Activated CD4-positive, alpha-beta T cell treated with anti-CD3 and anti-CD28 coated beads, Interleukin-2, amount 10 ng/mL, durations not matched to agents 24 days and 14 days (primary cell): ENCODE measurements at regions of chr11 and their contacts with region 1.

Region 1: DNA sequence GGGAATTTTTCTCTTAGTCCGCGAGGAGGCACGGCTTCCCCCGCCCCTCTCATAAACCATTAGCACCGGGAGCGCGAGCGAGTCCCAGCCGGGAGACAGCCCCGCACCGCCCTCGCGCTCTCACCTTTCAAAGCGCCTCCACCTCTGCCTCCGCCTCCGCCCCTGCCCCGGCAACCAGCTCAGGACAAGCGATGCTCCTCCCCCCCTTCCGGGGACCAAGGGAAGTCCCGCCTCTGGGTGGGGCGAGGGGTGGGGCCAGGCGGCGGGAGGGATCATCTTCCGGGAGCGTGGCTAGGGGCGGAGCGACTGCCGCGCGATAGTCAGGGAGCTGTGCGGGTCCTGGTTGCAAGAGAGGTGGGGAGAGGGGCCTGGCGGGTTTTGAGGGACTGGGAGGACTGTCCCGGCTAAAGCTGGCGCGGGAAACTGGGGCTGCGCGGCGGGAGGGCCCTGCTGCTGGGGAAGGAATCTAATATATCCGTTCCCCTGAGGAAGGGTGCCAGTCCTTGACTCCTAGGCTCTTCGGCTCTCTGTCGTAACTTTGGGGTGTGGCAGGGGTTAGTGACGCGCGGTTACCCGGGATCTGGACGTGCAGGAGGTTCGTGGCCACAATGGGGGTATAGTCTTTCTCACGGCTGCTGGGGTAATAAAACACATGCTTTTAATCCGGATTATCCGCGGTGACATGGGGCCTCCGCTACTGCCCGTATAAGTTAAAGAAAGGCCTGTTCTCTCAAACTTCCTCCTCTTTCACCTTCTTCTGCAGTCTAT is at the starts of genes CCDC82 and JRKL:
- DNase-seq: peak; percentile 99
- H3K4me3 Mint-ChIP-seq: peak within 1 kb of the TSS; percentile 93
- H3K27ac Mint-ChIP-seq: peak within 1 kb of the TSS; percentile 96
- H3K4me1 Mint-ChIP-seq: peaks cover 52% of the 10 kb centered on the region
- H3K27me3 Mint-ChIP-seq: no peaks in the 10 kb centered on the region
- total RNA-seq, gene CCDC82: 27.6 and 31.8 TPM in 2 replicates
- total RNA-seq, gene JRKL: 9.9 and 11.9 TPM in 2 replicates

Region 2: DNA sequence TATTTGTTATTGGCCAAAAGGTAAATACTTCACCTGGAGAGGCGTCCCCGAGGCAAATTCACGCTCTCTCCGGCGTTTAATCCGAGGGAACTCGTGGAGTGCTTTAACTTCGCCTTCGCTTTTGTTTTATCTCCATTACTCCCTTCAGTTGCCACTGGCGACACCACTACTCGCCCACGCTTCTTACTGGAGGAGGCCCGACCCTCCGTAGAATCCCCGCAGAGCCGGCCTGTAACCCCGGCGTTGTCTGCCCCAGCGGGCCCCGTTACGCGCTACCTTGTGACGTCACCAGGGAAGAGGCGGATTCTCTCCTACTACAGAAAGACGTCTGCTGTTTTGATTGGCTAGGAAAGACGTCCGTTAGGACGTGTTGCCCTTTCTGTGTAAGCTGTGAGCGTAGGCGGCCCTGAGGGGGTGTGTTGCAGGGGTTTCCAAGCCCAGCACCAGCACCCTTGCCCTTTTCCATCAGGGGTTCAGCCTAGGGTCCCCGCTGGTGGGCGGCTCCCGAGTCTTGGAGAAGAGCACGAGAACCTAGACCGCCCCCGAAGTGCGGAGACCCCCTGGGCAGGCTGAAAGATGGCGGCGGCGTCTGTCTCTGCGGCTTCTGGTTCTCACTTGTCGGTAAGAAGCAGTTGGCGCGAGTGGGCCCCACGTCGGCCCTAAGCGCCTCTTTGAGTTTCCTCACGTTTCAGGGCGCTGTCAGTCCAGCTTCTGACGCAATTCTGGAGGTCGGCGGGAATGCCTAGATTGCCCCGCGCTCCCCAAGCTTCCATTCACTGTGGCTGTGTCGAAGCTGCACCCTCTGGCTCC is 599.6 kb before region 1 on chr11 and contains the start of gene CEP57:
- intact Hi-C with region 1: loop called (anchors 1 kb)
- DNase-seq: peak; percentile 98
- H3K4me3 Mint-ChIP-seq: peak within 1 kb of the TSS; percentile 98
- H3K27ac Mint-ChIP-seq: peak within 1 kb of the TSS; percentile 100
- H3K4me1 Mint-ChIP-seq: peaks cover 45% of the 10 kb centered on the region
- H3K27me3 Mint-ChIP-seq: no peaks in the 10 kb centered on the region
- total RNA-seq, gene CEP57: 75.7 and 87.6 TPM in 2 replicates

Region 3: DNA sequence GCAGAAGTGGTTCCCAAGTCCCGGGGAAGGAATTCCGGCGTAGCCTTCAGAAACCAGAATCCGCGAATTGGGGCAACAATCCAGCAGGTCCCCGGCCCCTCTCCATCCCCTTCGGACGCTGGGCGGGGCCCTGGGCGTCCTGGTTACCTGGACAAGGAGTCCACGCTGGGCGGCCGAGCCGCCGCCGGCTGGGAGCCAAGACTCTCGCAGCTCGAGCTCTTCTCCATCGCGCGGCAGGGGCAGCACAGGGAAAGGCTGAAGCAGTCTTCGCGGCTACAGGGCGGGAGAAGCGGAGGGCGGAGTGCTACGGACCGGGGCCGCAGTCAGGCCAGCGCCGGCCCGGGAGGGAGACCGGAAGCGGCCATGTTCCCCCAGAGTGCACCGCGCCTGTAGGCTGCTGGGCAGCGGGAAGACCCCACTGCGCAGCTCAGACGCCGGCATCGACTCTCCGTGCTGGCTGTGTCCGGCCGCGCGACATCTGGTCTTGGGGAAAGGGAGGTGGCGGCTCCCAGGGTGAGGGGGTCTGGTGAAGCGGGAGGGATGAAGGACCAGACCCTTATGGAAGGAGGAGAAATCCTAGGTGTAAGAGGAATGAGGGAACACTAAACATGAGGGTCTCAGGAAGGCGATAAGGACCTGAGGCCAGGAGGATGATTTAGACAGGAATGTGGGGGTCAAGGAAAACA is 466.0 kb before region 1 on chr11 and contains the start of gene MTMR2:
- intact Hi-C with region 1: loop called (anchors 5 kb)
- DNase-seq: peak; percentile 86
- H3K4me3 Mint-ChIP-seq: peak within 1 kb of the TSS; percentile 99
- H3K27ac Mint-ChIP-seq: peak within 1 kb of the TSS; percentile 96
- H3K4me1 Mint-ChIP-seq: peaks cover 24% of the 10 kb centered on the region
- H3K27me3 Mint-ChIP-seq: peaks cover 12% of the 10 kb centered on the region
- total RNA-seq, gene MTMR2: 37.5 and 38.4 TPM in 2 replicates

Region 4: DNA sequence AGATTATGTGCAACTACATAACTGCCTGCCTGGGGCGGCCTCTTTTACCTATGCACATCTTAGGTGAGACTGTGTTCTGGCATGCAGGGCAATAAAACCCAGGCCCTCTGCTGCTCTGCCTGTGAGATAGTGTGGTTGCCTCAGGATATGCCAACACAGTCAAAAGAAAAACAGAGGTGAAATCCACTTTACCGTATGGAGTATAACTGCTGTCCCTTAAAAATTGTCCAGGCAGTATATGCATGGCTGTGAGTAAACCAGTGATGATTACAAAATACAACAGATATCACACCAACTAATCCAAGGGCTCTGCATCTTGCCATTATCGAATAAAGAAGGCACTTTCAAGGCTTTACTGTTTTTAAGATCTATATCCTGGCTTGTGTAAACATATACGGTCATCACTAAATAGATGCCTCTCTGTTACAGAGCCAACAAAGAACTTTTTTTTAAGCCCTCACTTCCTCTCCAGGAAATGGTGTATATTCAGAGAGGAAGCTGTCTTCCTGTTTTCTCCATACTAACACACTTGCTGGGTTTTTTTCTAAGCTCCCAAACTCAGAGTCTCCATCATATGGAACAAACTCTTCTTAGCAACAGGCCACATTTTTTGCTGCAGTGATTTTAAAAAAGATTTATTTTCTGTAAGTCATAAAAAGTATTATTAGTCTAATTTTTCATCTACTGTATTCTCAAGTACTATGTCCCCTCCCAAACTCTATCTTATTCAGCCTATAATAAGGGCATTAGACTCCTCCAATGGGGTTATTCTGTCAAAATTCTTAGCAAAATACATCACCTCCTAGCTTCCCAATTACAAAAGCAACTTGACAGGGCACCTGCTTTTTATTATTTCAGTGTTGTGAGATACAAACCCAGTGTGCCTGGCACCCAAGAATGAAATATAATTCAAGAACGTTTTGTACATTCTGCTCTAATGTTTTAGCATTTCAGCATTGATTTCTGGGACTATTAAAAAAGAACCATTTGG is 182.2 kb before region 1 on chr11:
- intact Hi-C with region 1: loop called (anchors 5 kb)
- DNase-seq: peak; percentile 78
- H3K4me3 Mint-ChIP-seq: peak overlapping the region; percentile 74
- H3K27ac Mint-ChIP-seq: peak overlapping the region; percentile 93
- H3K4me1 Mint-ChIP-seq: peaks cover 71% of the 10 kb centered on the region
- H3K27me3 Mint-ChIP-seq: no peaks in the 10 kb centered on the region

Region 5: GRCh38 chr11:96254087-96254486 is 135.8 kb before region 1 on chr11:
- intact Hi-C with region 1: loop called (anchors 5 kb)
- DNase-seq: peak; percentile 83
- H3K4me3 Mint-ChIP-seq: peak overlapping the region; percentile 79
- H3K27ac Mint-ChIP-seq: peak overlapping the region; percentile 84
- H3K4me1 Mint-ChIP-seq: peaks cover 73% of the 10 kb centered on the region
- H3K27me3 Mint-ChIP-seq: no peaks in the 10 kb centered on the region

Region 6: DNA sequence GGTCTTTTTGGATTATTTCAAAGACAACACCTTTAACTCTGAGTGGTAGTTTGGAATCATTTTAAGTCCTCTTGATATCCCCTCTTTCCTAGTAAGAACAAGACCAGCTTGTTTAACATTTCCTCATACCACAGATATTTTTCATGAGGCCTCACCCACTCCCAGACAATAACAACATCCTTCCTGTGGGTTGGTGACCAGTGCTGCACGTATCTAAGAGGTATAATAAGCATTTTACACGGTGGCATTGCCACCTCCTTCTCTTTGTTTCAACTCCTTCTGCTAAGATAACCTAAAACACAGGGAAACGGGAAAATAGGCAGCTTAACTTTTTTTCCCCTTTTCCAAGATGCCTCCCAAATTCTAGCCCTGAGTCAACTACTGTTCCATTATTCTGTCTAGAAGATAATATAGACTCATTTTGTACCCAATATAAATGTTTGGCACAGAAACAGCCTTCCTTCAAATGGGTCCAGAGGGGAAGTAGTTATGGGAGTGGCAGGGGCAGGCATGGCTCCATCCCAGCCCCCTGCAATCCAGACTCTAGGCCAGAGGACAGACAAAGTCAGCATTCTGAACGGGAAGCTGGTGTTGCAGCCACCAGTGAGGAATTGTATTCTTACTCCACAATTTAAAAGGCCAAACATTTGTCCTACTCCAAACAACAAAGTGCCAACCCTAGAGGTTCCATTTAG is 75.4 kb before region 1 on chr11:
- intact Hi-C with region 1: no loop called
- DNase-seq: no peak
- H3K4me3 Mint-ChIP-seq: peak overlapping the region; percentile 33
- H3K27ac Mint-ChIP-seq: peak overlapping the region; percentile 74
- H3K4me1 Mint-ChIP-seq: peaks cover 40% of the 10 kb centered on the region
- H3K27me3 Mint-ChIP-seq: no peaks in the 10 kb centered on the region